GM12878 (cell line): ENCODE measurements at regions of chr13 and their contacts with region 1.

Region 1: GRCh38 chr13:41916173-41916954 is 44.5 kb downstream of the VWA8 start:
- DNase-seq: peak; percentile 89
- ATAC-seq: peak; percentile 90
- H3K4me3 ChIP-seq: no peak overlapping the region
- H3K27ac ChIP-seq: peak overlapping the region; percentile 82
- H3K4me1 ChIP-seq: peaks cover 41% of the 10 kb centered on the region
- H3K27me3 ChIP-seq: no peaks in the 10 kb centered on the region
- CTCF ChIP-seq: no peak
- EP300 ChIP-seq: peak; percentile 97 to 99
- POLR2A ChIP-seq: no peak
- RAD21 ChIP-seq: no peak

Region 2: DNA sequence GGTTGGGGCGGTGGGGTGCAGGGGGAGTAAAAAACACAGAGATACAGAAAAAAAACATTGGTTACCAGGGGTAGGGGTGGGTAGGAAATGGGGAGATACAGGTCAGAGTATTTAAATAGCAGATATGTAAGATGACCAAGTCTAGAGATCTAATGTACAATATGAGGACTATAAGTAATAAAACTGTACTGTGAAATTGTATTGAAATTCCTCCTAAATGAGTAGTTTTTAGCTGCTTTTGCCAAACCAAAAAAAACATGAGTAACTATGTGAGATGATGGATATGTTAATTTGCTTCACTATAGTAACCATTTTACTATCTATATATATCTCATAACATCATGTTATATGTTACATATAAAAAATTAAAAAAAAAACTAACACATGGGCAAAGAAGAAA is 15.0 kb after region 1 on chr13:
- CTCF ChIA-PET with region 1: interaction called, 12 read pairs
- POLR2A ChIA-PET with region 1: interaction called, 5 read pairs
- RAD21 ChIA-PET with region 1: interaction called, 12 read pairs
- SMC1A ChIA-PET with region 1: interaction called, 18 read pairs
- in situ Hi-C with region 1: no loop called
- intact Hi-C with region 1: no loop called
- DNase-seq: no peak
- ATAC-seq: no peak
- H3K4me3 ChIP-seq: no peak overlapping the region
- H3K27ac ChIP-seq: no peak overlapping the region
- H3K4me1 ChIP-seq: peaks cover 4% of the 10 kb centered on the region; the same call in 1 of the 2 replicates
- H3K27me3 ChIP-seq: no peaks in the 10 kb centered on the region
- CTCF ChIP-seq: no peak
- EP300 ChIP-seq: no peak
- POLR2A ChIP-seq: no peak
- RAD21 ChIP-seq: no peak

Region 3: GRCh38 chr13:41955605-41956004 is 39.2 kb after region 1 on chr13:
- CTCF ChIA-PET with region 1: interaction called, 5 read pairs
- POLR2A ChIA-PET with region 1: interaction called, 8 read pairs
- RAD21 ChIA-PET with region 1: interaction called, 7 read pairs
- SMC1A ChIA-PET with region 1: interaction called, 27 read pairs
- in situ Hi-C with region 1: no loop called
- intact Hi-C with region 1: loop called (anchors 1 kb)
- DNase-seq: no peak
- ATAC-seq: peak; percentile 64
- H3K4me3 ChIP-seq: no peak overlapping the region
- H3K27ac ChIP-seq: no peak overlapping the region
- H3K4me1 ChIP-seq: peaks cover 4% of the 10 kb centered on the region; the same call in 1 of the 2 replicates
- H3K27me3 ChIP-seq: no peaks in the 10 kb centered on the region
- CTCF ChIP-seq: no peak
- EP300 ChIP-seq: no peak
- POLR2A ChIP-seq: no peak
- RAD21 ChIP-seq: no peak

Region 4: DNA sequence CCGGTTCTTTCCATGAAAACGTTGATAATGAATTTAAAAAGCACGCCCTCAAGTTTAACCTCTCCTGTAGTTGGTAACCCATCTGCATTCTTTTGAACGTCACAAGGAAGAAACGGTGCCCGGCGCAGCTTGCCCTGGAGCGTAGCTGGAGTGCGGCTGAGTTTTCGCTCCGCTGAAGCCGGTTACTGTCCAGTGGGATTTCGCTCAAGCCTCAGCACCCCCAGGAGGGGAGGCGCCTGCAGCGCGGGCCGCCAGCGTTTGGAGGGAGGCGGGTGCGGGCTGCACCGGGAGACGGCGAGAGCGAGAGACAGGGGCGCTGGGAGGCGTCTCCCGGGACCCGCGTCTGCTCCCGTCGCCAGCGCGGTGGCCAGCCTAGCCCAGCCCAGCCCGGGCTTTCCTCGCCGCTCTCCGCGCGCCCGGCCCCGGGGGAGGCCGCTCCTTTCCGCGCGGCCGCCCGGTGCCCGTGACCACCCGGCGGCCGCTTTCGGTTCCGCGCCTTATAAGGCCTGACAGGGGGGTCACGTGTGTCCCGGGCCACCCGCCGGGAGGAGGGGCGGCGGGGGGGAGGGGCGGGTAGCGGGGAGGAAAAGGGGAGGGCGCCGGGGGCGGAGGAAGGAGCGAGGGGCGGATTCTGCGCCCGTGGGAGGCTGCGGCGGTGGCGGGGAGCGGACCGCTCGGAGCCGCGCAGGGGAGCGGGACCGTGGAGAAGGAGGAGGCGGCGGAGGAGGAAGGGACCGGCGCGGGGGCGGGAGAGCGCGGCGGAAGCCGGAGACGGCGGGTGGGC is 123.8 kb after region 1 on chr13:
- CTCF ChIA-PET with region 1: no interaction called
- POLR2A ChIA-PET with region 1: interaction called, 3 read pairs
- RAD21 ChIA-PET with region 1: interaction called, 4 read pairs
- SMC1A ChIA-PET with region 1: interaction called, 16 read pairs
- in situ Hi-C with region 1: loop called (anchors 5 kb)
- intact Hi-C with region 1: no loop called
- DNase-seq: peak; percentile 25
- ATAC-seq: peak; percentile 82
- H3K4me3 ChIP-seq: peak overlapping the region; percentile 88
- H3K27ac ChIP-seq: peak overlapping the region; percentile 76
- H3K4me1 ChIP-seq: no peaks in the 10 kb centered on the region; the same call in 1 of the 2 replicates
- H3K27me3 ChIP-seq: no peaks in the 10 kb centered on the region
- CTCF ChIP-seq: no peak
- EP300 ChIP-seq: no peak
- POLR2A ChIP-seq: peak; percentile 97
- RAD21 ChIP-seq: no peak

Region 5: DNA sequence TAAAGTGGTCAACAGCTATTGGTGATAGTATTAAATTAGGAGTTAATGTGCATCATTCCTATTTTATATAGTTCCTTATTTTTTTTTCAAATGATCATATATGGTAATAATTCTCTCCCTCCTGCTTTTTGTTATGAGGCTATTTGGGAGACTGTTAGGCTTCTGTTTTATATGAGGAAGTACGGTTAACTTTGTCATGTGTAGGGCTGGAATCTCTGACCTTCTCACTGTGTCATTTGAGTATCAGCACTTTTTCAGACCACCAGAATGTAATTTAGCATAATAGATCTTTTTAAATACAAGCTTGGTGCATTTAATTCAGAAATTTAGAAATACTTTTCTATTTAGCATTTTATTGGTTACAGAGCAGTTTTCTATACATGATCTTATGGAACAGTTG is 139.8 kb after region 1 on chr13:
- CTCF ChIA-PET with region 1: interaction called, 3 read pairs
- POLR2A ChIA-PET with region 1: interaction called, 3 read pairs
- RAD21 ChIA-PET with region 1: interaction called, 12 read pairs
- SMC1A ChIA-PET with region 1: interaction called, 4 read pairs
- in situ Hi-C with region 1: no loop called
- intact Hi-C with region 1: no loop called
- DNase-seq: no peak
- ATAC-seq: peak; percentile 28; the same call in 2 of the 3 replicates
- H3K4me3 ChIP-seq: no peak overlapping the region
- H3K27ac ChIP-seq: no peak overlapping the region
- H3K4me1 ChIP-seq: peaks cover 5% of the 10 kb centered on the region; the same call in 1 of the 2 replicates
- H3K27me3 ChIP-seq: no peaks in the 10 kb centered on the region
- CTCF ChIP-seq: no peak
- EP300 ChIP-seq: no peak
- POLR2A ChIP-seq: no peak
- RAD21 ChIP-seq: no peak